Endothelial cell of umbilical vein (primary cell): ENCODE measurements at regions of chr2 and their contacts with region 1.

Region 1: DNA sequence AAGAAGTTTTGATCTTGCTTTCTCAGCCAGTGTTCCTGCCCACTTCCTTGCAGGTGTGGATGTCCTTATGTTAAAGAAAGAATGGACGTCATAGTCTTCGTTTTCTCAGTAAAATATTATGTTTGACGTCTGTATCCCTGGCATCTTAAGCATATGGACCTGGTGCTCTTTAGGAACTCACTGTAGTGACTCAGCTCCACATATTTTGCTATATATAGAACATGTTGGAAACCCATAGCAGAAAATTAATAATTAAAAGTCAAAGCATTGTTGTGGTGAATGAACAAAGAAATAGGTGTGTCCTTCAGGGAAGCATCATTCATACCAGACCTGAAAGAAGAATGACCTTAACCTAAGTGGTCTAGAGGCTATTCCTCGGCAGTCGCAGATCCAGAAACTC is 196.1 kb downstream of the MCFD2 start:
- DNase-seq: peak; percentile 28
- H3K4me3 ChIP-seq: no peak overlapping the region
- H3K27ac ChIP-seq: no peak overlapping the region
- H3K4me1 ChIP-seq: peaks cover 6% of the 10 kb centered on the region
- H3K27me3 ChIP-seq: no peaks in the 10 kb centered on the region
- CTCF ChIP-seq: no peak
- POLR2A ChIP-seq: no peak

Region 2: DNA sequence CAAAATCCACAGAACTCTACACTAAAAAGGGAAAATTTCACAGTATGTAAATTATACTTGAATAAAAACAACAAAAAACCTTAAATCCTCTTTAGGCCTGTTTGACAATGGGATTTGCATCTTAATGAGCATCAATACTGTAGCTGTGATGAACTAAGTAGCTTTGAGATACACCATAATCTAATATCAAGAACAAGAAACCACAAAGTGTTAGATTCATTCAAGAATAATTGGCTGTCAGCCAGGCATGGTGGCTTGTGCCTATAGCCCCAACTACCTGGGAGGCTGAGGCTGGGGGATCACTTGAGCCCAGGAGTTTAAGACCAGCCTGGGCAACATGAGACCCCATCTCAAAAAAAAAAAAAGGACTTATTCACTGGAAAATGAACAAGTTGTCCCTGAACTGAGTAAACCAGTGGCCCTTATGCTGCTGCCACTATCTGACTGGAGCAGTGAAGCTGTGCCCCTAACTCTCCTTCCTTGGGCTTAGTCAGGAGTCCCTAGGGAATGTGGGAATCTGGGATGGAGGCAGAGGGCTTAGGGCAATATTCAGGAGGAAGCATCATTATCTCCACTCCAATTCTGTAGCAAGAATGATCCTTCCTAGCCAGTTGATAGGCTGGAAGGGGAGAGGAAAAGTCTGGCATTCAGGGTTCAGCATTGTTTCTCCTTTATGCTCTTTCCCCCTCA is 979.5 kb before region 1 on chr2:
- CTCF ChIA-PET with region 1: no interaction called
- POLR2A ChIA-PET with region 1: no interaction called
- dilution Hi-C with region 1: no loop called
- intact Hi-C with region 1: loop called (anchors 5 kb)
- DNase-seq: no peak
- H3K4me3 ChIP-seq: no peak overlapping the region
- H3K27ac ChIP-seq: no peak overlapping the region
- H3K4me1 ChIP-seq: peaks cover 6% of the 10 kb centered on the region
- H3K27me3 ChIP-seq: no peaks in the 10 kb centered on the region
- CTCF ChIP-seq: no peak
- POLR2A ChIP-seq: no peak

Region 3: DNA sequence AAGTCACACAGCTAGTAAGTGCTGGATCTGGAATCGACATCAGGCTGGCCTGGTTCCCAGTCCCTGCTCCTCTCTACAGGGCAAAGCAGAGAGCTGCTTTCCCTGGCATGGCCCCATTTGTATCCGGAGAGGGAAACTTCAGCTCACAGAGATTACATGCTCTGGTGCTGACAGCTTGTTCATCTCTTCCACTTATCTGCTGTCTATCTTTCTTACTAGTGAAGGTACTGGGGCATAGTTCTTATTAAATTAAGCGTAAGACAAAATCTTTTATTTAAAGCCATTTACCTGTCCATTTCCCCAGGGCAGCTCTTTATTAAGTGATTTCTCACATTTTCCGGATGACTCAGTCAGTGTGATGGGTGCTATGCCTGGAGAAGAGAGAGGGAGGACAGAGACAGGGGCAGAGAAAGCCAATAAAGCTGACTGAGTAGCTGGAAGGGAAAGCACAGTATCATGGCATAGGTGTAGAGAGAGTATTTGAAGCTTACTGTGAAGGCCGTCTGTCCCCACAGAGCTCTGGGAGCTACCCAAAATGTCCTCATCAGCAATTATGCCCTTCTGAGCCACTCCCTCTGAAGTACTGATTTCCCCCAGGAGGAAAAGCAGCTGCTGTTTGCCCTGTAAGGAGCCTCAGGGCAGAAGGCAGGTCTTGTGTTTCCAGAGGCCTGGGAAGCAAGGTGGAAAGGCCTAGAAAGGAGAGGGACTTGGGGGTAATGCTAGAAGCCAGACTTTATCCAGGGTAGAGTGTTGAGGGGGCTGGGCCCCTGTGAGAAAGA is 466.4 kb before region 1 on chr2:
- CTCF ChIA-PET with region 1: no interaction called
- POLR2A ChIA-PET with region 1: no interaction called
- dilution Hi-C with region 1: no loop called
- intact Hi-C with region 1: no loop called
- DNase-seq: peak; percentile 74
- H3K4me3 ChIP-seq: no peak overlapping the region
- H3K27ac ChIP-seq: no peak overlapping the region
- H3K4me1 ChIP-seq: peaks cover 22% of the 10 kb centered on the region
- H3K27me3 ChIP-seq: no peaks in the 10 kb centered on the region
- CTCF ChIP-seq: no peak
- POLR2A ChIP-seq: no peak